CD8-positive, alpha-beta T cell (primary cell): ENCODE measurements at regions of chr12 and their contacts with region 1.

Region 1: DNA sequence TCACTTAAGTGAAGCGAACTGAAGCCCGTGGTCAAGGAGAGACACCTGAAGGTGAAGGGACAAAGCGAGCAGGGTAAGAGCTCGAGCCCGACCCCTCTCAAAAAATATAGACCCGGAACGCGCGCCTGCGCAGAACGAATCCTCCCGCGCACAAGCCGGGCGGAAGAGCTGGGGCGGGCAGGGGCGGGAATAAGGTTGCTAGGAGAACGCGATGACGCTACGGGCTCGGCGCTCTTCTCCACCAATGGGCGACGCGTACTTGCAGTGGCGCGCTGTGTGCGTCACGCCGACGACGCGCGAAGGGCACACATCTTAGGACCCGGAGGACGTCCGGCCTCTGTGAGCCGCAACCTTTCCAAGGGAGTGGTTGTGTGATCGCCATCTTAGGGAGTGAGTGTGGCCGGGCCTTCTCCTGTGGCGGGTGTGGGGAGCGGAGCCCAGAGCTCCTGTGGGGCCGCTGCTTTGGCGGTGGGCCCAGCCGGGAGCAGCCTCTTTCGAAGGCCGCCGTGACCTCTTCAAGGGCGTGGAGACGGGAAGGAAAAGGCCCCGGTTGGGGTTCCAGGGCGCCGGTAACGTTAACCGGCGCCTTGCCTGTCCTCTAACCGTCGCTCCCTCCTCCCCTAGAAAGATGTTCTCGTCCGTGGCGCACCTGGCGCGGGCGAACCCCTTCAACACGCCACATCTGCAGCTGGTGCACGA is at the start of gene SLC25A3:
- DNase-seq: peak; percentile 90 to 99 (median 95)
- ATAC-seq: peak; percentile 92
- H3K4me3 ChIP-seq: peak within 1 kb of the TSS; percentile 89 to 97
- H3K4me3 Mint-ChIP-seq: peak within 1 kb of the TSS; percentile 97
- H3K27ac ChIP-seq: peak within 1 kb of the TSS; percentile 92 to 99
- H3K27ac Mint-ChIP-seq: peak within 1 kb of the TSS; percentile 98
- H3K4me1 ChIP-seq: peaks cover 23% of the 10 kb centered on the region
- H3K4me1 Mint-ChIP-seq: peaks cover 39% of the 10 kb centered on the region
- H3K27me3 ChIP-seq: no peaks in the 10 kb centered on the region
- H3K27me3 Mint-ChIP-seq: no peaks in the 10 kb centered on the region
- CTCF ChIP-seq: no peak
- total RNA-seq, gene SLC25A3: 686 TPM

Region 2: DNA sequence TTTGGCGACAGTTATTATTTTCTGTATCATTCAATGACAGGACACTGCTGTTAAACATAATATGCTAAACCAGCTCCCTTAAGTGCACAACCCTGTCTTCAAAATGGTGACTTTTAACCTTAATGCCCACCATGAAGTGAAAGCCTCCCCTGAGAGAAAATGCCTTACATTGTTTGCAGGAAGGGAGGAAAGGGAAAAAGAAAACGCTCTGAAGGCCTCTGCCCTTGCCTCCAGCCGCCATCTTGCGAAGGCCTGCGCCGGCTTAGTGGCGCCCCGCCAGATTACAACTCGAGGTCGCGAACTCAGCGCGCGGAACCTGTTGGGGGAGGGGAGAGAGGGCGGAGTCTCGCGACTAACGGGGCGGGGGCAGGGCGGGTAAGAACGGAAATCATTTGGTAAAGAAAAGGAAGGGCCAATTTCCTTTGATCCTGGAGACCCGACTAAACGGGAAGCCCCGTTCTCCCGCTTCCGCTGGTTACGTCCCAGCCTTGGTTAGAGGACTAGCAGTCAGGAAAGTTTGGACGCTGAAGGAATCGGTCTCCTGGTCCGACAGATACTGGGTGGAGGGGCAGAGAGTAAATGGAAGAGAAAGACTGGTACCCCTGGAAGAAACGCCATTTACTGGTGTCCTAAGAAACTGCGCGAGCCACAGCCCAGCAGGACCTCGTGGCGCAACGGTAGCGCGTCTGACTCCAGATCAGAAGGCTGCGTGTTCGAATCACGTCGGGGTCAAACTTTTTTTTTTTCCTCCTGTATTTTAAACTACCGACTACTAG is 89.7 kb before region 1 on chr12:
- CTCF ChIA-PET with region 1: interaction called, 3 read pairs
- POLR2A ChIA-PET with region 1: interaction called, 3 read pairs
- intact Hi-C with region 1: loop called (anchors 1 to 5 kb)
- DNase-seq: peak; percentile 89 to 97 (median 94)
- ATAC-seq: peak; percentile 89
- H3K4me3 ChIP-seq: peak overlapping the region; percentile 89 to 96
- H3K4me3 Mint-ChIP-seq: peak overlapping the region; percentile 99
- H3K27ac ChIP-seq: peak overlapping the region; percentile 91 to 99
- H3K27ac Mint-ChIP-seq: peak overlapping the region; percentile 99
- H3K4me1 ChIP-seq: peaks cover 3% of the 10 kb centered on the region
- H3K4me1 Mint-ChIP-seq: peaks cover 20% of the 10 kb centered on the region
- H3K27me3 ChIP-seq: no peaks in the 10 kb centered on the region
- H3K27me3 Mint-ChIP-seq: no peaks in the 10 kb centered on the region
- CTCF ChIP-seq: no peak

Region 3: DNA sequence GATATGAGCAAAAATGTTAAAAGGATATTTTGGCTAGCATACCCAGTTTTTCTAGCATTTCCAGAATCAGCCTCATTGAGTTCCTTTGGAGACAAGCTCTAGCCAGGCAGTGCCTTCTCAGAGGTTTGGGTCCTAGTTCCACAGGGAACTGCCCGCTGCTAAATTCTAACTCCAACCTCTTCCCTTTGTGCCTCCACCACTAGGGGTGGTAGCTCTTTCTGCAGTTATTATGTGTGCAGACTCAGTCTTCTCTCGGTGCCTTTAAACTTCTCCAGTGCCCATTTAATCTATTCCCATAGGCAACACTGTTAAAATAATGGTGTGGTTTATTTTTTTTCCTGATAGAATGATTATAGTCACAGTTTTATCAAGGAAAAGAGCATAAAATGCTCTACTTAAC is 21.5 kb before region 1 on chr12:
- CTCF ChIA-PET with region 1: interaction called, 19 read pairs
- POLR2A ChIA-PET with region 1: interaction called, 4 read pairs
- intact Hi-C with region 1: no loop called
- DNase-seq: no peak
- ATAC-seq: no peak
- H3K4me3 ChIP-seq: no peak overlapping the region
- H3K4me3 Mint-ChIP-seq: no peak overlapping the region
- H3K27ac ChIP-seq: no peak overlapping the region
- H3K27ac Mint-ChIP-seq: no peak overlapping the region
- H3K4me1 ChIP-seq: no peaks in the 10 kb centered on the region
- H3K4me1 Mint-ChIP-seq: no peaks in the 10 kb centered on the region
- H3K27me3 ChIP-seq: no peaks in the 10 kb centered on the region
- H3K27me3 Mint-ChIP-seq: no peaks in the 10 kb centered on the region
- CTCF ChIP-seq: no peak

Region 4: DNA sequence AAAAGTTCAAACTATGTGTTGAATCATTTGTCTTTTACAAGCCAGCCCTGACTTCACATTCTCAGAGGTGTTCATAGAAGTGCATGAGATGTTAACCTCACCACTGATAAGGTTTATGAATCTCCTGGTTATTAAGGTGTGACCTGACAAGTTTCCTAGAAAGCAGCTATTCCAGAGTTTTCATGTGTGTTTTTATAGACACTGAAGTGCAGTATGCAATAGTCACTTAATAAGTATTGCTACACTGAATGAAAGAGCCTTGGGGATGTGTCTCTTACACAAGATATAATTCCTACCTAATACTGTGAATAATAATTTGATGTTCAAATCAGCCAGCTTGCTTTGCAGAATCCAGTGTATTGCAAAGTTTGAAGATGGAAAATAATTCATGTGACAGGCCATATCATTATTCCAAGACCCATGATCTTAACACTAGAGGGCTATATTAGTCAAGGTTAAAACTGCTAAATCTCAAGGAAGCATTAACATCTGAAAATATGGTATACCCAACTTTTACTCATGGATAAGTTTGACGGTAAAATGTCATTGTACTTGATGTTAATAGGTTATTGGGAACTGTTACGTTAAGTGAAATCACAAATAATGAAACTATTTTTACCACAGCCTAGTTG is 13.0 kb after region 1 on chr12:
- CTCF ChIA-PET with region 1: interaction called, 4 read pairs
- POLR2A ChIA-PET with region 1: interaction called, 23 read pairs
- intact Hi-C with region 1: no loop called
- DNase-seq: no peak
- ATAC-seq: no peak
- H3K4me3 ChIP-seq: no peak overlapping the region
- H3K4me3 Mint-ChIP-seq: no peak overlapping the region
- H3K27ac ChIP-seq: no peak overlapping the region
- H3K27ac Mint-ChIP-seq: no peak overlapping the region
- H3K4me1 ChIP-seq: no peaks in the 10 kb centered on the region
- H3K4me1 Mint-ChIP-seq: peaks cover 4% of the 10 kb centered on the region
- H3K27me3 ChIP-seq: no peaks in the 10 kb centered on the region
- H3K27me3 Mint-ChIP-seq: no peaks in the 10 kb centered on the region
- CTCF ChIP-seq: no peak

Region 5: DNA sequence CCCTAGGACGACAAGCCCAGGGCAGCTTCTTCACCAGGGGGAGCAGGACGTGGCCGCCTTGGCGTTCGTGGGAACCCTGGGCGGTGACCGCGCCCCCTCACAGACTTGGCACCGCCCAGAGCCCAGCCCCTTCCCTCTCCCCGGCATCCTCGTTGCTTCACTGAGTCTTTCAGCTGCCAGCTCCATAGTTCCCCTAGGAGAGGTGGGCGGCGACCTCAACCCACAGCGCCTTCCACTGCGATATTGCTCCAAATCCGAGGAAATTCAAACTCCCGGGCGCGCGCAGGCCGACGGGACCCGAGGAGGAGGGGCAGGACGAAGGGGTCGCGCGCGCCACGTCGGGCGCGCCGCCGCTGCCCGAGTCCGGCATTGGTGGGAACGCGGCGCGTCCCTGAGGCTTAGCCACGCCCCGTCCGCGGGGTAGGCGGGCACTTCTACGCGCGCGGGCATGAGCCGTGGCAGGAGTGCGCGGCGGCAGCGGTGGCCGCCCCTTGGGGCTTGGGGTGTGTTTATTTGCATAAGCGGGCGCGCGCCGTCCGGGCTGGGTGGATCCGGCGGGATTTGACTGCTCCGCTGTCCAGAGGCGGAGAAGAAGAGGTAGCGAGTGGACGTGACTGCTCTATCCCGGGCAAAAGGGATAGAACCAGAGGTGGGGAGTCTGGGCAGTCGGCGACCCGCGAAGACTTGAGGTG is 51.4 kb after region 1 on chr12 and contains the starts of genes APAF1 and IKBIP:
- CTCF ChIA-PET with region 1: interaction called, 4 read pairs
- POLR2A ChIA-PET with region 1: interaction called, 30 read pairs
- intact Hi-C with region 1: loop called (anchors 1 kb)
- DNase-seq: peak; percentile 94 to 99 (median 97)
- ATAC-seq: peak; percentile 89
- H3K4me3 ChIP-seq: peak within 1 kb of the TSS; percentile 93 to 99
- H3K4me3 Mint-ChIP-seq: peak within 1 kb of the TSS; percentile 99
- H3K27ac ChIP-seq: peak within 1 kb of the TSS; percentile 60 to 90
- H3K27ac Mint-ChIP-seq: peak within 1 kb of the TSS; percentile 94
- H3K4me1 ChIP-seq: peaks cover 14% of the 10 kb centered on the region
- H3K4me1 Mint-ChIP-seq: peaks cover 44% of the 10 kb centered on the region
- H3K27me3 ChIP-seq: no peaks in the 10 kb centered on the region
- H3K27me3 Mint-ChIP-seq: no peaks in the 10 kb centered on the region
- CTCF ChIP-seq: no peak
- total RNA-seq, gene APAF1: 10.5 to 11.9 TPM
- total RNA-seq, gene IKBIP: 1.4 to 1.9 TPM

Region 6: GRCh38 chr12:98733667-98734350 is 140.3 kb after region 1 on chr12:
- CTCF ChIA-PET with region 1: no interaction called
- POLR2A ChIA-PET with region 1: no interaction called
- intact Hi-C with region 1: no loop called
- DNase-seq: no peak
- ATAC-seq: no peak
- H3K4me3 ChIP-seq: no peak overlapping the region
- H3K4me3 Mint-ChIP-seq: no peak overlapping the region
- H3K27ac ChIP-seq: no peak overlapping the region
- H3K27ac Mint-ChIP-seq: no peak overlapping the region
- H3K4me1 ChIP-seq: no peaks in the 10 kb centered on the region
- H3K4me1 Mint-ChIP-seq: no peaks in the 10 kb centered on the region
- H3K27me3 ChIP-seq: no peaks in the 10 kb centered on the region
- H3K27me3 Mint-ChIP-seq: no peaks in the 10 kb centered on the region
- CTCF ChIP-seq: no peak